H1 (cell line): ENCODE measurements at regions of chr1 and their contacts with region 1.

Region 1: GRCh38 chr1:102772831-102773230 is 335.5 kb downstream of the COL11A1 start:
- DNase-seq: no peak
- H3K4me3 ChIP-seq: no peak overlapping the region
- H3K27ac ChIP-seq: no peak overlapping the region
- H3K4me1 ChIP-seq: peaks cover 0 to 4% (median 2%) of the 10 kb centered on the region in 4 experiments; a peak in 3 of 7 replicates
- H3K27me3 ChIP-seq: no peaks in the 10 kb centered on the region
- CTCF ChIP-seq: peak; percentile 3 to 28 (median 17); a peak in 2 of 4 replicates
- EP300 ChIP-seq: no peak
- POLR2A ChIP-seq: no peak
- RAD21 ChIP-seq: peak in 1 of 2 experiments; percentile 25; a peak in 1 of 4 replicates

Region 2: GRCh38 chr1:102758418-102758817 is 14.4 kb before region 1 on chr1:
- CTCF ChIA-PET with region 1: interaction called, 10 read pairs
- POLR2A ChIA-PET with region 1: no interaction called
- DNase-seq: no peak
- H3K4me3 ChIP-seq: no peak overlapping the region
- H3K27ac ChIP-seq: no peak overlapping the region
- H3K4me1 ChIP-seq: no peaks in the 10 kb centered on the region
- H3K27me3 ChIP-seq: no peaks in the 10 kb centered on the region
- CTCF ChIP-seq: no peak
- EP300 ChIP-seq: no peak
- POLR2A ChIP-seq: no peak
- RAD21 ChIP-seq: no peak